ENCODE measurements at regions of chr2 and their contacts with region 1.

Region 1: GRCh38 chr2:64330281-64331113 is 123.5 kb upstream of the LGALSL start:
- DNase-seq: peak; percentile 63 to 87 (median 79)
- ATAC-seq: peak; percentile 83 to 89 (median 84)
- H3K4me3 ChIP-seq: no peak overlapping the region
- H3K27ac ChIP-seq: peak overlapping the region in 2 of 4 donors; percentile 17 to 35
- H3K4me1 ChIP-seq: no peaks in the 10 kb centered on the region
- H3K27me3 ChIP-seq: no peaks in the 10 kb centered on the region
- CTCF ChIP-seq: peak; percentile 72 to 90 (median 84)

Region 2: DNA sequence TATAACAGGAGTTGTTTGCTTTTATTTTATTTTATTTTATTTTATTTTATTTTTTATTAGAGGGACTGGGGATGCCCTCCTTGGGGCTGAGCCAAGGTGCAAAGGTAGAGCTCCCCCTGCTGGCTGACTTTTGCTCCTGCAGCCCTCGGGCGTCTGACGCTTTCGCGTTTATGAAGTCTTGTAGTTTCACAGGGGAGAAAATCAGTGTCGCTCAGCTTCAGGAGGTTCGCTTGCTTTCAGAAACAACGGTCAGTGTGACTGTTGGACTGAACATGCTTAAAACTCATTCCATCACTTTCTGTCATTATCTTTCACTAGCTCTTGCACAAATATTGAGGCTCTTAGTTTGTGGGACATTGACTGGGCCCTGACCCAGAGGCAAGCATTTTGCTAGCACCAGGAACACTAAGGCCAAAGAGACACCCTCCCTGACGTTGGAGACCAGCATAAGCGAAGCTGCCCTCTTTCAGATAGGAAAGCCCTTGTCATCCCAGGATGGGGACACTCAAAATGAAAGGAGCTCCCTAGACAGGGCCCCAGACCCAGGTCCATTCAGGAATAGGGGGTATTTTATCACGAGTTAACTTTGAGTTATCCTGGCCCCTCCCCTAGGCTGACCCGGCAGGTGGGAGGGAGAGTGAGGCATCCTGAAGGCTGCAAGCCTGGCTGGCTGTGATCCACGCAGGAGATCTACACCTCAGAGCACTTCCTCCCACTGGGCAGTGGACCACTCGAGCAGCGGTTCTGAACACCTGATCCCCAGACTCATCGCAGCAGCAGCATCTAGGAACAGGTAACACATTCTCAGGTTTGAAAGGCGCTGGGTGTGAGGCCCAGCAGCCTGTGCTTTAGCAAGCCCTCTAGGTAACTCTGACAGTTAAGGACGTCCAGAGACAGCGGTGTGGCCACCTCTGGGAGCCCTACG is 157.8 kb after region 1 on chr2:
- intact Hi-C with region 1: loop called in 2 of 3 experiments (anchors 5 kb)
- DNase-seq: peak; percentile 25 to 90 (median 68)
- ATAC-seq: peak; percentile 75 to 93 (median 88)
- H3K4me3 ChIP-seq: no peak overlapping the region
- H3K27ac ChIP-seq: no peak overlapping the region
- H3K4me1 ChIP-seq: no peaks in the 10 kb centered on the region
- H3K27me3 ChIP-seq: no peaks in the 10 kb centered on the region
- CTCF ChIP-seq: peak; percentile 86 to 98 (median 97)

Region 3: GRCh38 chr2:64562148-64562784 is 231.8 kb after region 1 on chr2:
- intact Hi-C with region 1: loop called in 1 of 3 experiments (anchors 5 kb)
- DNase-seq: no peak
- ATAC-seq: peak in 3 of 4 donors; percentile 83 to 88 (median 87)
- H3K4me3 ChIP-seq: no peak overlapping the region
- H3K27ac ChIP-seq: no peak overlapping the region
- H3K4me1 ChIP-seq: peaks cover 0 to 8% (median 0%) of the 10 kb centered on the region in 3 donors
- H3K27me3 ChIP-seq: no peaks in the 10 kb centered on the region
- CTCF ChIP-seq: peak in 1 of 4 donors; percentile 22